GM23248 (cell line): ENCODE measurements at regions of chr5 and their contacts with region 1.

Region 1: DNA sequence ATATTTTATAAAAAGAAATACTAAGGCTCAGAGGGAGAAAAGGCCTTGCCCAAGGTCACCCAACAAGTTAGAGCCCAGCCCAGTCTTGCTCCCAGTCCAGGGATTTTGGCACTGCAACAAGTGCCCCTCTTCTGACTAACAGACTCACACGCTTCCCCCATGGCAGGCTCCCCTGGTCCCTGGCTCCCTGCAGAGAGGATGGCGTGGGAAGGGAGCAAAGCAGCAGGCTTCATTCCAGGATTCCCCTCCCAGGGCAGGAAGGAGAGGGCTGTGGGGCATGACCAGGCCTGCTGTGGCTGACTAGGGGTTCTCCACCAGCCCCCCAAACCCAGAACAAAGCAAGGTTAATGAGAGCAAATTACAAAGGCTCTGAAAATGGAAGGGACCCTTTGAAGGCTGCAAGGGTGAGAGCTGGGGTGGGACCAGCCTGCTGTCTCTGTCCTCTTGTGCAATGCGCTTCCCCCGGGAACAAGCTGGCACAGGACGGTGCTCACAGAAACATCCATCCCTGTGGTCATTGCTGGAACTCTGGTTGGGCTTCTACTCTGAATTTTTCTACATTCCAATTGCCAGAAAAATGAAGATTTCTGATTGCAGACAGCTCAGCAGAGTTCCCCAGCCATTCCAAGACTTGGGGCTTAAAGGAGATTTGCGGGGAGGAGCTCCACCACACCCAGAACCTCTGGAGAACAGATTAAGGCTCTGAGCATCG is 37.1 kb upstream of the FAT2 start:
- DNase-seq: peak; percentile 72
- H3K4me3 ChIP-seq: no peak overlapping the region
- H3K27ac ChIP-seq: peak overlapping the region; percentile 69
- H3K4me1 ChIP-seq: peaks cover 16% of the 10 kb centered on the region; the same call in 1 of the 2 replicates
- H3K27me3 ChIP-seq: 0 out of 2 replicates have a peak, but pooled peaks cover 5% of the 10 kb centered on the region

Region 2: DNA sequence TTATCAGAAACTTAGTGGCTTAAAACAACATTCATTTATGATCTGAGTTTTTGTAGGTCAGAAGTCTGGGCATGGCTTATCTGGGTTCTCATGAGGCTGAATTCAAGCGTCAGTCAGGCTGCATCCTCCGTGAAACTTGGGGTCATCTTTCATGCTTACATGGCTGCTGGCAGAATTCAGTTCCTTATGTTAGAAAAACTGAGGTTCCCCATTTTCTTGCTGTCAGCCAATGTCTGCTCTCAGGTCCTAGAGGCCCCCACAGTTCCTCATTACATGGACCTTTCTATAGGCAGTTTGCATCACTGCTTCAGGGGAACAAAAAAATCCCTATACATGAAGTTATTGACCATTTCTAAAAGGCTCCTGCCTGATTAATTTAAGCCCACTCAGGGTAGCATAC is 860.6 kb after region 1 on chr5:
- in situ Hi-C with region 1: loop called (anchors 25 kb)
- DNase-seq: no peak
- H3K4me3 ChIP-seq: no peak overlapping the region
- H3K27ac ChIP-seq: no peak overlapping the region
- H3K4me1 ChIP-seq: no peaks in the 10 kb centered on the region
- H3K27me3 ChIP-seq: no peaks in the 10 kb centered on the region